ENCODE measurements at regions of chrX and their contacts with region 1.

Region 1: DNA sequence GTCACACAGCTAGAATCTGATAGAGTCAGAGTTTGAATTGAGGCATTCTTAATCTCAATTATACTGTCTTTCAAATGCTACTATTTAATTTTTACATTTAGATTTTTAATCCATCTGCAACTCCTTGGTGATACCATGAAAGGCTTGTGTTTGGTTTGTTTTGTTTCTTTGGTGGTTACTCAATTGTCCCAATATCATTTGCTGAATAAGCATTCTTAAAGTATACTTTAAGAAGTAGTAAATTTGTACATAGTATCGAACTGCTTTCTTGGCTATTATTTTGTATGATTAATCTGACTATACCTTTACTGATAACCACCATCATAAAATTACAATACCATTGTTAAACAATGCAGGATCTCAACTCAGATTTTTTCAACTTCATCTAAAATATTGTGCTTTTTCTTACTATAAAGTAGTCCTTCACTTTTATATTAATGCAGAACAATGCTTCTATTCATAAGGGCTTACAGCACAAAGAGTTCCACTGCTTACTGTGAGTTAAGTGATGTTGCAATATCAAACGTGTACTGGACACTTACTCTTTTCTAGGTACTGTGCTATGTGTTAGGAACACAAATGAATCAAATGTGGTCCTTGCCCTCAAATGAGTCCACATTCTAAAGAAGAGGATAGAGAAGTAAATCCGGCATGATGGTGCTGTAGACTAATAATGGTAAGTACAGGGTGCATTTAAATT is 111.2 kb upstream of the GRIA3 start:
- DNase-seq: no peak
- H3K4me3 ChIP-seq: no peak overlapping the region
- H3K27ac ChIP-seq: no peak overlapping the region
- H3K4me1 ChIP-seq: no peaks in the 10 kb centered on the region
- H3K27me3 ChIP-seq: no peaks in the 10 kb centered on the region
- CTCF ChIP-seq: no peak

Region 2: DNA sequence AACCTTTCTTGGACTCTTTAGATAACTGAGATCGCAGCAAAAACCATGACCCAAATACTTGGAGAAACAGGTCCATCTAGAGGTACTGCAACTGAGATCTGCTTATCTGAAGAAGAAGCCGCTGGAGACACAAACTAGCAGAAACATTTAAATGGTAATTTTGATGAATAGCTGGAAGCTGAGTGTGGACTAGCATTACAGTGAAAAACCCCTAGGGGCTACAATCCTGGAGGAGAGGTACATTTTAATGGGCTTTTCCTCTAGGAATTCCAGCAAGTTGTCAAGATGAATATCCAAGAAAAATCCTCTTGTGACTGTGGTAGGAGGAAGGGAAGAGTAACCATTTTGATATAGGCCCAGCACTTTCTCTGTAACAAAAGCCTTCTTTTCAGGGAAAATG is 481.3 kb before region 1 on chrX:
- CTCF ChIA-PET with region 1: interaction called, 12 read pairs
- POLR2A ChIA-PET with region 1: no interaction called
- intact Hi-C with region 1: no loop called
- DNase-seq: no peak
- H3K4me3 ChIP-seq: no peak overlapping the region
- H3K27ac ChIP-seq: no peak overlapping the region
- H3K4me1 ChIP-seq: no peaks in the 10 kb centered on the region
- H3K27me3 ChIP-seq: no peaks in the 10 kb centered on the region
- CTCF ChIP-seq: no peak

Region 3: DNA sequence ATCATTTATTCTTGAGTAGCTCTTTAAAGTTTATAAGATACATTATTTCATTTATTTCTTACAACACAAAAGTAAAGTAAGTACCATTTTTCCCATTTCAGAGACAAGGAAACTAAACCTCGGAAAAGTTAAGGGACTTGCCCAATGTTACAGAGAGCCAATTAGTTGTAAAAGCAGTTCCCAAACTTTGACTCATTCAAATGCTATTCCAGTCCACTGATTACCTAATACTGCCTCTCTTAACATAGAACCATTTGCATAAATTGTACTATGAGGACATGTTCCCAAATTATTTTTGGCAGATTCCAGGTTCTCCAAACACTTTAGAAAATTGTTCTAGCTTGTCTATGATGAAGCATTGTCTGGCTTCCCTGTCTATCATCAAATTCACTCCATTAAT is 65.6 kb after region 1 on chrX:
- CTCF ChIA-PET with region 1: no interaction called
- POLR2A ChIA-PET with region 1: no interaction called
- intact Hi-C with region 1: no loop called
- DNase-seq: no peak
- H3K4me3 ChIP-seq: no peak overlapping the region
- H3K27ac ChIP-seq: no peak overlapping the region
- H3K4me1 ChIP-seq: no peaks in the 10 kb centered on the region
- H3K27me3 ChIP-seq: no peaks in the 10 kb centered on the region
- CTCF ChIP-seq: no peak

Region 4: GRCh38 chrX:123169247-123169901 is 96.5 kb after region 1 on chrX:
- CTCF ChIA-PET with region 1: no interaction called
- POLR2A ChIA-PET with region 1: no interaction called
- intact Hi-C with region 1: no loop called
- DNase-seq: no peak
- H3K4me3 ChIP-seq: no peak overlapping the region
- H3K27ac ChIP-seq: no peak overlapping the region
- H3K4me1 ChIP-seq: no peaks in the 10 kb centered on the region
- H3K27me3 ChIP-seq: no peaks in the 10 kb centered on the region
- CTCF ChIP-seq: no peak